Activated T-helper 1 cell treated with anti-CD3 and anti-CD28 coated beads, Interleukin-12 subunit alpha, Interleukin-12 subunit beta, Interleukin-2, Interleukin-4 antibody, amounts not matched to agents 30 ng/mL and 10 ng/mL and 1 ng/mL, durations not matched to agents 14 hours and 24 hours and 36 hours (primary cell): ENCODE measurements at regions of chr19 and their contacts with region 1.

Region 1: DNA sequence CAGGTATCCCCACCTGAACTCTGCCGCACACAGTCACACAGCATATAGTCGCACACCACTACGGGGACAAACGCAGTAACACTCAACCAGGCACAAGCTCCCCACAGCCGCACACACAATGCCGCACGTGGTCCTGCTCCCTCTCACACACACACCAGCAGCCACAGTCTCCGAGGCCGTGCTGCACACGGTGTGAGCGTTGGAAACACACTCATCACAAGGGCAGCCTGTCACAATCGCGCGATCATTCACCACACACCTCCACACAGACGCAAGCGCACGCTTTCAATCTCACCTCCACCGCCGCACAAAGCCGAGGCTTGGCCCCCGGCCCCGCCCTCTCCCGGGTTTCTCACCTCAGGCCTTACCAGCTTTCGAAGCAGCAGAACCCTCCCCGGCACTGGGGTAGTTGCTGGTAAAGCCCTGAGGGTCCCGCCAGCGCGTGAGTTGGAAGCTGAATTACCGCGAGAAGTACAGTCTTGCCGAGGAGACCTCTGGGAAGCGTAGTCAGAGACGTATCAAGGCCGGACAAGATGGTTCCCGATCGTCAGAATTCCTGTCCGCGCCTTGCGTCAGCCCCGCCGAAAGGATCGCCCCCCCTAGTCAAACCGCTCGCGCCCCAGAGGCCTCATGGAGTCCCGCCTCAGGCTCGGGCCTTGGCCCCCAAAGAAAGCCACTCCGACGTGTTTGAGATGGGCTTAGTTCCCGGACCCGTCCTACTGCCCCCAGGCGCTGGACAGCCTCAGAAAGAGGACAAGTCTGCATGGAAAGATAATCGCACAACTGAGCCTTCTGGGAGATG is at the start of gene ZNF566:
- DNase-seq: peak; percentile 88
- H3K4me3 Mint-ChIP-seq: peak within 1 kb of the TSS; percentile 96
- H3K27ac Mint-ChIP-seq: peak within 1 kb of the TSS; percentile 97
- H3K4me1 Mint-ChIP-seq: peaks cover 18% of the 10 kb centered on the region
- H3K27me3 Mint-ChIP-seq: no peaks in the 10 kb centered on the region
- total RNA-seq, gene ZNF566: 6.9 and 8.7 TPM in 2 replicates

Region 2: GRCh38 chr19:36054119-36054732 is 435.1 kb before region 1 on chr19 and contains the start of gene THAP8:
- intact Hi-C with region 1: loop called (anchors 5 kb)
- DNase-seq: peak; percentile 100
- H3K4me3 Mint-ChIP-seq: peak within 1 kb of the TSS; percentile 99
- H3K27ac Mint-ChIP-seq: peak within 1 kb of the TSS; percentile 96
- H3K4me1 Mint-ChIP-seq: peaks cover 45% of the 10 kb centered on the region
- H3K27me3 Mint-ChIP-seq: no peaks in the 10 kb centered on the region
- total RNA-seq, gene THAP8: 1.6 TPM in 2 replicates

Region 3: GRCh38 chr19:36418287-36419001 is 70.9 kb before region 1 on chr19 and contains the start of gene ZFP82:
- intact Hi-C with region 1: loop called (anchors 1 kb)
- DNase-seq: peak; percentile 73
- H3K4me3 Mint-ChIP-seq: peak within 1 kb of the TSS; percentile 93
- H3K27ac Mint-ChIP-seq: peak within 1 kb of the TSS; percentile 94
- H3K4me1 Mint-ChIP-seq: peaks cover 18% of the 10 kb centered on the region
- H3K27me3 Mint-ChIP-seq: peaks cover 5% of the 10 kb centered on the region
- total RNA-seq, gene ZFP82: 5.1 and 5.3 TPM in 2 replicates

Region 4: DNA sequence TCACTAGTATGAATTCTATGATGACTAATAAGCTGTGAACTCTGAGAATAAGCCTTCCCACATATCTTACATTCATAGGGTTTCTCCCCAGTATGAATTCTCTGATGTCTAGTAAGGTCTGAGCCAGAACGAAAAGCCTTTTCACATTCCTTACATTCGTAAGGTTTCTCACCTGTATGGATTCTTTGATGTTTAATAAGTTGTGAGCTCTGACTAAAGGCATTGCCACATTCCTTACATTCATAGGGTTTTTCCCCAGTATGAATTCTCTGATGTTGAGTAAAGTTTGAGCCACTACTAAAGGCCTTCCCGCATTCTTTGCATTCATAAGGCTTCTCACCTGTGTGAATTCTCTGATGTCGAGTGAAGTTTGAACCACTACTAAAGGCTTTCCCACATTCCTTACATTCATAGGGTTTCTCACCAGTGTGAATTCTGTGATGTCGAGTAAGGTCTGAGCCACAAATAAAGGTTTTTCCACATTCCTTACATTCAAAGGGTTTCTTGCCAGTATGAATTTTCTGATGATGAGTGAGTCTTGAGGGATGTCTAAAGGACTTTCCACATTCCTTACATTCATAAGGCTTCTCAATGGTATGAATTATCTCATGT is 40.2 kb before region 1 on chr19:
- intact Hi-C with region 1: no loop called
- DNase-seq: no peak
- H3K4me3 Mint-ChIP-seq: no peak overlapping the region
- H3K27ac Mint-ChIP-seq: no peak overlapping the region
- H3K4me1 Mint-ChIP-seq: no peaks in the 10 kb centered on the region
- H3K27me3 Mint-ChIP-seq: no peaks in the 10 kb centered on the region

Region 5: GRCh38 chr19:36501973-36502372 is 12.7 kb after region 1 on chr19:
- intact Hi-C with region 1: no loop called
- DNase-seq: no peak
- H3K4me3 Mint-ChIP-seq: no peak overlapping the region
- H3K27ac Mint-ChIP-seq: no peak overlapping the region
- H3K4me1 Mint-ChIP-seq: no peaks in the 10 kb centered on the region
- H3K27me3 Mint-ChIP-seq: no peaks in the 10 kb centered on the region

Region 6: GRCh38 chr19:36605101-36605876 is 116.0 kb after region 1 on chr19 and contains the start of gene ZNF382:
- intact Hi-C with region 1: loop called (anchors 1 kb)
- DNase-seq: peak; percentile 85
- H3K4me3 Mint-ChIP-seq: peak within 1 kb of the TSS; percentile 90
- H3K27ac Mint-ChIP-seq: peak within 1 kb of the TSS; percentile 95
- H3K4me1 Mint-ChIP-seq: peaks cover 26% of the 10 kb centered on the region
- H3K27me3 Mint-ChIP-seq: no peaks in the 10 kb centered on the region
- total RNA-seq, gene ZNF382: 10.2 and 10.8 TPM in 2 replicates

Region 7: GRCh38 chr19:36837906-36838783 is 348.8 kb after region 1 on chr19 and contains the start of gene ZNF790:
- intact Hi-C with region 1: loop called (anchors 1 kb)
- DNase-seq: peak; percentile 81
- H3K4me3 Mint-ChIP-seq: no peak within 1 kb of the TSS
- H3K27ac Mint-ChIP-seq: no peak within 1 kb of the TSS
- H3K4me1 Mint-ChIP-seq: no peaks in the 10 kb centered on the region
- H3K27me3 Mint-ChIP-seq: no peaks in the 10 kb centered on the region
- total RNA-seq, gene ZNF790: 4.4 and 4.5 TPM in 2 replicates

Region 8: GRCh38 chr19:37309834-37310575 is 820.7 kb after region 1 on chr19:
- intact Hi-C with region 1: loop called (anchors 10 kb)
- DNase-seq: no peak
- H3K4me3 Mint-ChIP-seq: no peak overlapping the region
- H3K27ac Mint-ChIP-seq: no peak overlapping the region
- H3K4me1 Mint-ChIP-seq: peaks cover 10% of the 10 kb centered on the region
- H3K27me3 Mint-ChIP-seq: no peaks in the 10 kb centered on the region